CD4-positive, alpha-beta T cell (primary cell): ENCODE measurements at regions of chr3 and their contacts with region 1.

Region 1: DNA sequence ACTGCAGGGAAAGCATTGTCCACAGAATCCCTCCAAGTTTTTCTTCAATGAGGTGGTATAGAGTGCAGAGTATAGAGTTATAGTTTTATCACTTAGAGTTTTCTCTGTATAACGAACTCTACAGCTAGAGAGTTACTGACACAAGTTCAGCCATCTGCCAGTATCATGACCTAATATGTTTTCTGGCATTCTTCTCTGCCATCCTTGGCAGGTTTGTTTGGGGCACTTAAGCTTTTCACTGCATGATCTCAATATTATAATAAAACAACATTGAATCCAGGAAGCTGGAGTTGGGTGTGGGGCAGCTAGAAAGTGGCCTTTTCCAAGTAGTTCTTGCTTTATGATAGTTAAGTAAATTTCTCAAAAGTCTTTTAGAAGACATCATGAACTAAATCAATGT is 743.5 kb upstream of the ARPP21 start:
- DNase-seq: no peak
- ATAC-seq: no peak
- H3K4me3 ChIP-seq: no peak overlapping the region
- H3K4me3 Mint-ChIP-seq: no peak overlapping the region
- H3K27ac ChIP-seq: no peak overlapping the region
- H3K27ac Mint-ChIP-seq: no peak overlapping the region
- H3K4me1 ChIP-seq: no peaks in the 10 kb centered on the region
- H3K4me1 Mint-ChIP-seq: no peaks in the 10 kb centered on the region
- H3K27me3 ChIP-seq: no peaks in the 10 kb centered on the region
- H3K27me3 Mint-ChIP-seq: no peaks in the 10 kb centered on the region
- CTCF ChIP-seq: no peak

Region 2: DNA sequence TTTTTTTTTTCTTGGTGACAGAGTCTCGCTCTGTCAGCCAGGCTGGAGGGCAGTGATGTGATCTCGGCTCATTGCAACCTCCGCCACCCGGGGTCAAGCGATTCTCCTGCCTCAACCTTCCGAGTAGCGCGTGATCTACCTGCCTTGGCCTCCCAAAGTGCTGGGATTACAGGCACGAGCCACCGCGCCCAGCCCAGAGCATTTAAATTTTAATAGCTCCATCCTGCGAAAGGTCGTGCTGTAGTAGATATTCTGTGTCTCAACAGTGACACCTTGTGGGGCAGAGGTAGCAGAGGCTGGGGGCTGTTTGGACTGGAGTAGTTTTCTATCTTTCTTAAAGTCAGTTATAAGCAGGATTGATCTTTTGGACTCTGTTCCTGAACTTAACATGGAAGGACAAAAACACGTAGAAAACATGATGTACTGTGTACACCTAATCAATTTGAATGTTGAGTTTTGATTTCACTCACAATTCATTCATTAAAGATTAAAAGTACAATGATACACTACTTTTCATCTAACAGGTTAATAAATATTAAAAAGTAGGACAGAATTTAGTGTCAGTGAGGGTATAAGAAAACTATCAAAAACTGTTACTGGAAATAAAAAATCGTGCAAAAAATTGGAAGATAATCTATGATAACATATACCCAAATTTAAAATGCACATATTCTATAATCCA is 1108.4 kb before region 1 on chr3:
- CTCF ChIA-PET with region 1: no interaction called
- POLR2A ChIA-PET with region 1: no interaction called
- intact Hi-C with region 1: no loop called
- DNase-seq: peak; percentile 25 to 83 (median 43)
- ATAC-seq: peak; percentile 89
- H3K4me3 ChIP-seq: no peak overlapping the region
- H3K4me3 Mint-ChIP-seq: no peak overlapping the region
- H3K27ac ChIP-seq: no peak overlapping the region
- H3K27ac Mint-ChIP-seq: no peak overlapping the region
- H3K4me1 ChIP-seq: peaks cover 6% of the 10 kb centered on the region
- H3K4me1 Mint-ChIP-seq: no peaks in the 10 kb centered on the region
- H3K27me3 ChIP-seq: no peaks in the 10 kb centered on the region
- H3K27me3 Mint-ChIP-seq: peaks cover 30% of the 10 kb centered on the region
- CTCF ChIP-seq: peak; percentile 87

Region 3: GRCh38 chr3:33954956-33955355 is 940.9 kb before region 1 on chr3:
- CTCF ChIA-PET with region 1: no interaction called
- POLR2A ChIA-PET with region 1: no interaction called
- intact Hi-C with region 1: loop called in 1 of 2 experiments (anchors 5 kb)
- DNase-seq: peak in 2 of 14 experiments; percentile 8 to 14
- ATAC-seq: no peak
- H3K4me3 ChIP-seq: no peak overlapping the region
- H3K4me3 Mint-ChIP-seq: no peak overlapping the region
- H3K27ac ChIP-seq: no peak overlapping the region
- H3K27ac Mint-ChIP-seq: no peak overlapping the region
- H3K4me1 ChIP-seq: no peaks in the 10 kb centered on the region
- H3K4me1 Mint-ChIP-seq: no peaks in the 10 kb centered on the region
- H3K27me3 ChIP-seq: no peaks in the 10 kb centered on the region
- H3K27me3 Mint-ChIP-seq: no peaks in the 10 kb centered on the region
- CTCF ChIP-seq: no peak